CD4-positive, alpha-beta memory T cell (primary cell): ENCODE measurements at regions of chr5 and their contacts with region 1.

Region 1: DNA sequence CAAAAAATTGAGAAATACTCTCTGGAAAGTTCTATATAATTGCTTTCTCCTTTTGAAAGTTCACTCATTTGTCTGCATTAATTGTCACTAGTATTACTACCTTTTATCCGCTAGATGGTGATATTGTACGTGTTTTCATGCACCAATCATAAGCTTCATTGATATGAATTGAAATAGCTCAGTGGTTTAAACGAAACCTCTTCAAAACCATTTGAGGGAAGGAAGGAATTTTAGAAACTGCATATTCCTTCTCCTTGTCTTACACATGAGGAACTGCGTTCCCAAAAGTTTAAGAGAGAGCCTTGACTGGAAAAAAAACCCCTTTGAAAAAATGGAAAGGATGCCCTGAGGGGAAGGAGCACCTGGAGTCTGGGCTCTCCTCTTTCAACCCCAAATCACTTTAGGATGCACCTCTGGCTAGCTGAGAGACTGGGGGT is 98.6 kb downstream of the YTHDC2 start:
- DNase-seq: peak in 4 of 5 donors; percentile 38 to 51 (median 48)
- H3K4me3 ChIP-seq: no peak overlapping the region
- H3K4me3 Mint-ChIP-seq: peak overlapping the region in 1 of 8 donors; percentile 33
- H3K27ac ChIP-seq: no peak overlapping the region
- H3K27ac Mint-ChIP-seq: no peak overlapping the region
- H3K4me1 ChIP-seq: peaks cover 4% of the 10 kb centered on the region
- H3K4me1 Mint-ChIP-seq: peaks cover 0 to 5% (median 3%) of the 10 kb centered on the region in 4 donors
- H3K27me3 ChIP-seq: no peaks in the 10 kb centered on the region
- H3K27me3 Mint-ChIP-seq: peaks cover 8 to 19% of the 10 kb centered on the region in 2 donors

Region 2: GRCh38 chr5:113336975-113337374 is 275.1 kb before region 1 on chr5:
- CTCF ChIA-PET with region 1: interaction called, 19 read pairs
- POLR2A ChIA-PET with region 1: no interaction called
- intact Hi-C with region 1: no loop called
- DNase-seq: no peak
- H3K4me3 ChIP-seq: no peak overlapping the region
- H3K4me3 Mint-ChIP-seq: no peak overlapping the region
- H3K27ac ChIP-seq: no peak overlapping the region
- H3K27ac Mint-ChIP-seq: no peak overlapping the region
- H3K4me1 ChIP-seq: peaks cover 6% of the 10 kb centered on the region
- H3K4me1 Mint-ChIP-seq: peaks cover 3 to 15% (median 8%) of the 10 kb centered on the region in 4 donors
- H3K27me3 ChIP-seq: no peaks in the 10 kb centered on the region
- H3K27me3 Mint-ChIP-seq: peaks cover 0 to 3% of the 10 kb centered on the region in 2 donors

Region 3: DNA sequence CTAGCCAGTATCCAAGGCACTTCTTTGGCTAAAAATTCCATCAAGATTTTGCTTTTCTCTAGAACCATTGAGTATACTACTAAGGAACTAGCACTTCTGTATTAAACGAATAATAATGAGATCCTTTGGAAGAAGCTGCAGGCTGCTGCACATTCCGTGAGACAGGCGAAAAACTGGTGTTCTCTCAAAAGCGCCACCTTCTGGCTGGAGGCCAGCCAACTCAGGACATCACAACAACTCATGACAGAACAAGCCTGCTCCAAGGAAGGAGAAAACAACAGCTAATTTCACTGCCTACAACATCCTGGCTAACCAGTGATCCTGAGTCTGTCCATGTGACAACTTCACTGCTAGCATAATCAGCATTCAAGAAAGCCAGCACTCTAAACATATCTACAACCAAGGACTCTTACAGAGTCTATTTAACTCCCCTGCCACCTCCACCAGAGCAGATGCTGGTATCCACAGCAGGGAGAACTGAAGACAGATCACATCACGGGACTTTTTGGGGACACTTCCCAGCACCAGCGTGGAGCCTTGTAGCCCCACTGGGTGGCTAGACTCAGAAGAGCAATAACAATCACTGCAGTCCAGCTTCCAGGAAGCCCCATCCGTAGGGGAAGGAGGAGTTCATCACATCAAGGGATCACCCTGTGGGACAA is 51.9 kb after region 1 on chr5:
- CTCF ChIA-PET with region 1: interaction called, 28 read pairs
- POLR2A ChIA-PET with region 1: no interaction called
- intact Hi-C with region 1: loop called (anchors 2 kb)
- DNase-seq: peak in 4 of 5 donors; percentile 2 to 19 (median 12)
- H3K4me3 ChIP-seq: no peak overlapping the region
- H3K4me3 Mint-ChIP-seq: no peak overlapping the region
- H3K27ac ChIP-seq: no peak overlapping the region
- H3K27ac Mint-ChIP-seq: no peak overlapping the region
- H3K4me1 ChIP-seq: no peaks in the 10 kb centered on the region
- H3K4me1 Mint-ChIP-seq: no peaks in the 10 kb centered on the region
- H3K27me3 ChIP-seq: no peaks in the 10 kb centered on the region
- H3K27me3 Mint-ChIP-seq: peaks cover 21 to 25% of the 10 kb centered on the region in 2 donors

Region 4: DNA sequence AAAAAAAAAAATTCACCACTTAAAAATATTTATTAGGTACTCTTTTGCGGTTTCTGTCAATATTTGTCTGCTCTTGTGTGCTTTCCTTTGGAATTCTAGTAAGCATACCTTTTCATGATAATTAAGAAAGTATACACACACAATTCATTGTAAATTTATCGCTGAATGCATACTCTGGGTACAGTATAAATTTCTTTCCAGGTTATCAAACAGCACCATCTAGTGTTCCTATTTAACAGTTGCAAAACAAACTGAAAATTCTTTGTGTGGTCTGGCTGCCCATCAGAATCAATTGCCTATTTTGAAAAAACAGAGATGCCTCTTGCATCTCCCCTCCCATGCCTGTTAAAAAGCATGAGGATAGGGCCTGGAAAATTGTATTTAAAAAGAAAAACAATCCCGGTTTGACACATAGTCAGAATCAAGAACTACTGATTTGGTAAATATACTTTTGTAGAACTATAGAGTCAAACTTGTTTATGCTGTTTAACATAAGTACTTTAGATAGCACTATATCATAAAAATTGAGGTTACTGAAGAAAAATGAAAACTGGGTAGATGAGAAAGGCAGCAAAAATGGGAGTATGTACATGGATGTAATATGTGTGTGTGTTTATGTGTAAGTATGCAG is 1634.4 kb after region 1 on chr5:
- CTCF ChIA-PET with region 1: interaction called, 15 read pairs
- POLR2A ChIA-PET with region 1: no interaction called
- intact Hi-C with region 1: loop called (anchors 1 kb)
- DNase-seq: peak in 4 of 5 donors; percentile 27 to 40 (median 28)
- H3K4me3 ChIP-seq: no peak overlapping the region
- H3K4me3 Mint-ChIP-seq: no peak overlapping the region
- H3K27ac ChIP-seq: no peak overlapping the region
- H3K27ac Mint-ChIP-seq: no peak overlapping the region
- H3K4me1 ChIP-seq: no peaks in the 10 kb centered on the region
- H3K4me1 Mint-ChIP-seq: peaks cover 10 to 36% (median 21%) of the 10 kb centered on the region in 4 donors
- H3K27me3 ChIP-seq: no peaks in the 10 kb centered on the region
- H3K27me3 Mint-ChIP-seq: no peaks in the 10 kb centered on the region

Region 5: DNA sequence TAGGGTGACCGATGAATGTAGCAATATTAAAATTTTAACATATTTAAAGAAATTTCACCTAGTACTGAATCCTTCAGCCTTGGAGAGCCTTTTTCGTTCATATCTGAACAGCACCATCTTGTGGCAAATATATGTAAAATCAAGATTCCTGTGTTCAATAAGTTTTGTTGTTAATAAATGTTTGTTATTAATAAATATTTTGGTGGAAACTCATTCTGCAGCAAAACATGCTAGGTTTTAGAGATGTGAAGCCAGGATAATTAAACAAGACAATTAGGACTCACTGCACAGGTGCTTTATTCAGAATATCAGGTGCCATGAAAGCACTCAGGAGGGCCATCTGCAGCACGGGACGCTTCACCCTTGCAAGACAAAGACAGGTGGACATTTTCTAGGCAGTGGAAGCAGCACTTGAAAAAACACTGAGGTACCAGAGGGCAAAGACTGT is 1974.5 kb after region 1 on chr5:
- CTCF ChIA-PET with region 1: no interaction called
- POLR2A ChIA-PET with region 1: no interaction called
- intact Hi-C with region 1: loop called (anchors 2 kb)
- DNase-seq: peak in 4 of 5 donors; percentile 19 to 37 (median 30)
- H3K4me3 ChIP-seq: no peak overlapping the region
- H3K4me3 Mint-ChIP-seq: no peak overlapping the region
- H3K27ac ChIP-seq: no peak overlapping the region
- H3K27ac Mint-ChIP-seq: no peak overlapping the region
- H3K4me1 ChIP-seq: no peaks in the 10 kb centered on the region
- H3K4me1 Mint-ChIP-seq: no peaks in the 10 kb centered on the region
- H3K27me3 ChIP-seq: no peaks in the 10 kb centered on the region
- H3K27me3 Mint-ChIP-seq: no peaks in the 10 kb centered on the region